CD4-positive, alpha-beta T cell (primary cell): ENCODE measurements at regions of chr2 and their contacts with region 1.

Region 1: DNA sequence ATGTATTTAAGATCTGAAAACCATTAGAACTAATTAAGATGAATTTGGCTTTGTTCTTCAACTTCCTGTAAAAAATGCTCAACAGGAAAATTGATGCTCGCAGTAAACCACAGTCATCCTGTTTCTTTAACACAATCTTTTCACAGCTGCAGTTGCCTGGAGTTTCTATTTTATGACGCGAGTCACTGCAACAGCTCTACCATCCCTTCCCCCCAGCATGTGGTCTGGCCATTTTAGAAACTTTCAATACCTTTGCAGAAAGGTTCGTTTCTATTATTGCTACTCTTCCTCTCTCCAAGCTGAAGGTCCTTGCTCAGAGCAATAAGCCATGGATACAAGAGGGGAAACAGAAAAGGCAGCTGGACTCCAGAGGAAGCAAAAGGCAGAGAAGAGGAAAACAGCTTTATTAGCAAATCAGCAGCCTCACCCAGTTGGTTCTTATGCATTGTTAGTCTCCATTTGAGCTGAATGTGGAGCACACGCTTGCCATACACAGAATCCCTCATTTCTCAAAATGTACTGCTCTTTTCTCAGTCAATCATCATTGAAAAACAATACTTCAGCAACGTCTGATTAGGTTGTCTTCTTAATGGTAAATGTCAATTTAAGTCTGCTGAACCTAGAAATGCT is 3.9 kb downstream of the WIPF1 start:
- DNase-seq: peak; percentile 40 to 95 (median 58)
- ATAC-seq: peak; percentile 78
- H3K4me3 ChIP-seq: peak overlapping the region; percentile 69
- H3K4me3 Mint-ChIP-seq: peak overlapping the region; percentile 98
- H3K27ac ChIP-seq: peak overlapping the region; percentile 75 to 91
- H3K27ac Mint-ChIP-seq: peak overlapping the region; percentile 95
- H3K4me1 ChIP-seq: peaks cover 47% of the 10 kb centered on the region
- H3K4me1 Mint-ChIP-seq: peaks cover 61% of the 10 kb centered on the region
- H3K27me3 ChIP-seq: no peaks in the 10 kb centered on the region
- H3K27me3 Mint-ChIP-seq: no peaks in the 10 kb centered on the region
- CTCF ChIP-seq: no peak

Region 2: DNA sequence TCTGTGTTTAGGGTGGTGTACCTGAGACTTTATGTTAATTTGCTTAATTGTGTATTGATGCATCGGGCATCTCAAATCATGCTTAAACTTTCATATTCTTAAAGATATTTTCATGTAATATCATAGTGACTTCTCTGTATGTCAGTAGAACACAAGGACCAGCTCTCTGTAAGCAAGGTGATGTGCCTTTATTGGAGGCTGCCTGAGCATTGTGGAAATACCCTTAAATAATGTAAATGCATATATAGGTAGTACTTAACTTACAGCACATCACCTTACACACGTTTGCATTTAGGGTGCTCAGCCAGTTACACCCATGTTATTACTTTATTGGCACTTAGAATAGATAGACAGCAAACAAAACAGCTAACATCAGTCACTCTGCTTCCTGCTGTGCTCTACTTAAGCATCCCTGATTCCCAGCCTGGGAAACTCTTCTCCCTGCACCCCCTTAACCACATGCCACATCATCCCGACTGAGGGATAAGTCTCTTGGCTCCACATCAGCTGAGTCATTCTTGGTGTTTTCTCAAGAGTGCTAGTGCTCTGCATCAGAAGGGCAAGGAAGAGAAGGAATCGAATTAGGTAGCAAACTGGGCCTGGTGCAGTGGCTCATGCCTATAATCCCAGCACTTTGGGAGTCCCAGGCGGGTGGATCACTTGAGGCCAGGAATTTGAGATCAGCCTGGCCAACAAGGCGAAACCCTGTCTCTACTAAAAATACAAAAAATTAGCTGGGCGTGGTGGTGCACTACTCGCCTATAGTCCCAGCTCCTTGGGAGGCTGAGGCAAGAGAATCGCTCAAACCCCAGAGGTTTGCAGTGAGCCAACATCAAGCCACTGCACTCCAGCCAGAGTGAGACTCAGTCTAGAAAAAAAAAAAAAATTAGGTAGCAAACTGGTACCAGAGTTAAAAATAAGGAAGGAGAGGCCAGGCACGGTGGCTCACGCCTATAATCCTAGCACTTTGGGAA is 1409.4 kb before region 1 on chr2:
- CTCF ChIA-PET with region 1: no interaction called
- POLR2A ChIA-PET with region 1: no interaction called
- intact Hi-C with region 1: no loop called
- DNase-seq: no peak
- ATAC-seq: no peak
- H3K4me3 ChIP-seq: no peak overlapping the region
- H3K4me3 Mint-ChIP-seq: no peak overlapping the region
- H3K27ac ChIP-seq: no peak overlapping the region
- H3K27ac Mint-ChIP-seq: no peak overlapping the region
- H3K4me1 ChIP-seq: no peaks in the 10 kb centered on the region
- H3K4me1 Mint-ChIP-seq: no peaks in the 10 kb centered on the region
- H3K27me3 ChIP-seq: no peaks in the 10 kb centered on the region
- H3K27me3 Mint-ChIP-seq: no peaks in the 10 kb centered on the region
- CTCF ChIP-seq: no peak

Region 3: DNA sequence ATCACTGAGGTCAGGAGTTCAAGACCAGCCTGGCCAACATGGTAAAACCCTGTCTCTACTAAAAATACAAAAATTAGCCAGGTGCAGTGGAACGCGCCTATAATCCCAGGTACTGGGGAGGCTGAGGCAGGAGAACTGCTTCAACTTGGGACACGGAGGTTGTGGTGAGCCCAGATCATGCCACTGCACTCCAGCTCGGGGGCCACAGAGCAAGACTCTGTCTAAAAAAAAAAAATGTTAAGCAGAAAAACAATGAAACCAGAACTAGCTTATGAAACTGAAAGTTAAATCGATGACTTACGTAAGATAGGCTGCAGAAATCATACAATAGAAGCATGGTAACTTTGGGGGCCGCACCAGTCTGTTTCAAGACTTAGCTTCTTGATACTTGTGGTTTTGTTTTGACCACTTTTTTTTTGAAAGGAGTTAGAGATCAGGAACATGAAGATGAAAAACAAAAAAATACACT is 100.7 kb before region 1 on chr2:
- CTCF ChIA-PET with region 1: no interaction called
- POLR2A ChIA-PET with region 1: interaction called, 80 read pairs
- intact Hi-C with region 1: loop called in 1 of 2 experiments (anchors 5 kb)
- DNase-seq: peak; percentile 28 to 89 (median 56)
- ATAC-seq: peak; percentile 83
- H3K4me3 ChIP-seq: peak overlapping the region; percentile 53
- H3K4me3 Mint-ChIP-seq: peak overlapping the region; percentile 90
- H3K27ac ChIP-seq: peak overlapping the region; percentile 85
- H3K27ac Mint-ChIP-seq: peak overlapping the region; percentile 95
- H3K4me1 ChIP-seq: peaks cover 54% of the 10 kb centered on the region
- H3K4me1 Mint-ChIP-seq: peaks cover 85% of the 10 kb centered on the region
- H3K27me3 ChIP-seq: no peaks in the 10 kb centered on the region
- H3K27me3 Mint-ChIP-seq: no peaks in the 10 kb centered on the region
- CTCF ChIP-seq: no peak

Region 4: GRCh38 chr2:174577967-174578589 is 15.6 kb before region 1 on chr2:
- CTCF ChIA-PET with region 1: interaction called, 243 read pairs
- POLR2A ChIA-PET with region 1: interaction called, 29 read pairs
- intact Hi-C with region 1: loop called in 1 of 2 experiments (anchors 2 kb)
- DNase-seq: peak in 12 of 14 experiments; percentile 26 to 85 (median 51)
- ATAC-seq: peak; percentile 82
- H3K4me3 ChIP-seq: no peak overlapping the region
- H3K4me3 Mint-ChIP-seq: no peak overlapping the region
- H3K27ac ChIP-seq: no peak overlapping the region
- H3K27ac Mint-ChIP-seq: peak overlapping the region; percentile 95
- H3K4me1 ChIP-seq: peaks cover 56% of the 10 kb centered on the region
- H3K4me1 Mint-ChIP-seq: peaks cover 94% of the 10 kb centered on the region
- H3K27me3 ChIP-seq: no peaks in the 10 kb centered on the region
- H3K27me3 Mint-ChIP-seq: no peaks in the 10 kb centered on the region
- CTCF ChIP-seq: peak; percentile 75

Region 5: DNA sequence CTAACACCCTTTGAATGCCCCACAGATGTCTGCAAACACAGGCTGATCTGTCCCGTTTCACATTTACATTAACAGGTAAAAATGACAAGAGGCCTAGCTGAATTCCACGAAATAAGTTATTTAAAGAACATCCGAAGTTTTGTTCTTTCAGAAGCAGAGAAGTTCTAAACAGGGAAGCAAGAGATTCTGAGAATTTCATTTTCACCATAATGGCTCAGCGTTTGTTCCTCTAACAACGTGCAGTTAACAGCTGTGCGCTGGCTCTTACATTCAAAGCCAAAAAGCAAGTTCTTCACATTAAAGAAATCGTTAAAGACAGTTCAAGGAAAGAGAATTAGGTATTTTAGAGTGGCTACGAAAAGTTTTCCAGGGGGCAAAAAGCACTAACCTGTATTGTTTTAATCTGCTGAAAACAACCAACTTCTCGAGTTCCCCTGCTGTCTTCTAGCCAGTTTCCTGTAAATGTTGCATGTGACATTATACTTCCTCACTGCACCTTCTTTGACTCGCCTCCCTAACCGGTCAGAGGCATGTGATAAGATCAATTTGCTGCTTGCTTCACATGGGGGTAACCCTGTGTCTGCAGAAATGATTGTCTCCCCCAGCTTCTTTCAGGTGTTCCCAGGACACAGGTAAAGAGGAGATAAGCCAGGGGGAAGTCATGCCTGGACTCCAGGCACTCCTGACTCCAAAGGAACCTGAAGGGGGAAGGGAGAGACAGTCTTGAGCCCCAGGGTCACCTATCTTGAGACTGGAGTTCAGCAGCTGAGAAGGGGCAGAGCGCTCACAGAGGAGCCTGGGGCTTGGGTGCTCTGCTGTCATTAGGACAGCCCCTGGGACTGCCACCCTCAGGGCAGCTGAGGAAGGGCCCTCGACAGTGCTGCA is 40.7 kb after region 1 on chr2:
- CTCF ChIA-PET with region 1: interaction called, 4 read pairs
- POLR2A ChIA-PET with region 1: interaction called, 54 read pairs
- intact Hi-C with region 1: loop called in 1 of 2 experiments (anchors 2 kb)
- DNase-seq: peak in 13 of 14 experiments; percentile 11 to 80 (median 41)
- ATAC-seq: peak; percentile 67
- H3K4me3 ChIP-seq: peak overlapping the region; percentile 73
- H3K4me3 Mint-ChIP-seq: peak overlapping the region; percentile 94
- H3K27ac ChIP-seq: peak overlapping the region; percentile 77 to 79
- H3K27ac Mint-ChIP-seq: peak overlapping the region; percentile 95
- H3K4me1 ChIP-seq: peaks cover 32% of the 10 kb centered on the region
- H3K4me1 Mint-ChIP-seq: peaks cover 68% of the 10 kb centered on the region
- H3K27me3 ChIP-seq: no peaks in the 10 kb centered on the region
- H3K27me3 Mint-ChIP-seq: no peaks in the 10 kb centered on the region
- CTCF ChIP-seq: no peak